ENCODE measurements at regions of chr14 and their contacts with region 1.

Region 1: GRCh38 chr14:75380656-75381055 is 47.2 kb upstream of the JDP2 start:
- DNase-seq: no peak

Region 2: GRCh38 chr14:75366963-75367362 is 13.7 kb before region 1 on chr14:
- intact Hi-C with region 1: loop called in 1 of 2 experiments (anchors 1 kb)
- DNase-seq: no peak

Measured in posterior vena cava (tissue), 2 donors.